Aorta (tissue), 5 donors: ENCODE measurements at regions of chr4 and their contacts with region 1.

Region 1: DNA sequence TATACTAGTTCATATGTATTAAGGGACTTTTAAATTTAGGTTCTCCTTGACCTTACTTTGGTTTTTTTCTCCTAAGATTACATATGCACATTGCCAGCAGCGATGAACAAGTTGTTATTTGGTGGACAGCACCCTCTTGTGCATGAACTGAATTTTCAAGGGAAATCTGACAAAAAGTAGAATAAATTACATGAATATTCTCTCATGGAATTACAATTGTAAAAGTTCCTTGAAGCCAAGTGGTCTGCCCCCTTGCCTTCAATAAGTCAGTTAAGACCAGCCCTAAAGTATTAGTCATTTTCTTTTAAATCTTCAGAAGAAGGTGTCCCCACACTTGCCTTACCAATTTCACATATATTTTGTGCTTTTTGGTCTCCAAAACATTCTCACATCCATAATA is 30.7 kb upstream of the SMARCA5 start:
- DNase-seq: no peak
- ATAC-seq: no peak
- H3K4me3 ChIP-seq: no peak overlapping the region
- H3K27ac ChIP-seq: no peak overlapping the region
- H3K4me1 ChIP-seq: no peaks in the 10 kb centered on the region
- H3K27me3 ChIP-seq: no peaks in the 10 kb centered on the region

Region 2: DNA sequence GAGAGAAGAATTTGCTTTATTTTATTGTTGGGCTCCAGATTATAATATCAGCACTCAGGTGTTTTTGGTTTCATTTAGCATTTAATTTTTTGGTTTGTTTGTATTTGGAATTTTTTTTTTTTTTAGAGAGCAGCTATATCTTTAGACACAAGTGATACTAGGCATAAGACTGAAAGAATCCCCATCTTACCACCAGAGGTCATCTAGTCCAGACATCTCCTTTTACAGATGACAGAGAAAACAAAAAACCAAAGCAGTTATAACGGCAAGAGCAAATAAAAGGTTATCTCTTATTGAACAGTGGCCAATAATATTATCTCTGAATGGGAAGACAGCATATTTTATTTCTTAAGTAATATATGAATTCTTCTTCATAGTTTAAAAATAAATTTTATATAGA is 275.3 kb before region 1 on chr4:
- intact Hi-C with region 1: loop called (anchors 2 to 5 kb)
- DNase-seq: no peak
- ATAC-seq: peak; percentile 74
- H3K4me3 ChIP-seq: no peak overlapping the region
- H3K27ac ChIP-seq: no peak overlapping the region
- H3K4me1 ChIP-seq: no peaks in the 10 kb centered on the region
- H3K27me3 ChIP-seq: no peaks in the 10 kb centered on the region